BJ (cell line): ENCODE measurements at regions of chr13 and their contacts with region 1.

Region 1: DNA sequence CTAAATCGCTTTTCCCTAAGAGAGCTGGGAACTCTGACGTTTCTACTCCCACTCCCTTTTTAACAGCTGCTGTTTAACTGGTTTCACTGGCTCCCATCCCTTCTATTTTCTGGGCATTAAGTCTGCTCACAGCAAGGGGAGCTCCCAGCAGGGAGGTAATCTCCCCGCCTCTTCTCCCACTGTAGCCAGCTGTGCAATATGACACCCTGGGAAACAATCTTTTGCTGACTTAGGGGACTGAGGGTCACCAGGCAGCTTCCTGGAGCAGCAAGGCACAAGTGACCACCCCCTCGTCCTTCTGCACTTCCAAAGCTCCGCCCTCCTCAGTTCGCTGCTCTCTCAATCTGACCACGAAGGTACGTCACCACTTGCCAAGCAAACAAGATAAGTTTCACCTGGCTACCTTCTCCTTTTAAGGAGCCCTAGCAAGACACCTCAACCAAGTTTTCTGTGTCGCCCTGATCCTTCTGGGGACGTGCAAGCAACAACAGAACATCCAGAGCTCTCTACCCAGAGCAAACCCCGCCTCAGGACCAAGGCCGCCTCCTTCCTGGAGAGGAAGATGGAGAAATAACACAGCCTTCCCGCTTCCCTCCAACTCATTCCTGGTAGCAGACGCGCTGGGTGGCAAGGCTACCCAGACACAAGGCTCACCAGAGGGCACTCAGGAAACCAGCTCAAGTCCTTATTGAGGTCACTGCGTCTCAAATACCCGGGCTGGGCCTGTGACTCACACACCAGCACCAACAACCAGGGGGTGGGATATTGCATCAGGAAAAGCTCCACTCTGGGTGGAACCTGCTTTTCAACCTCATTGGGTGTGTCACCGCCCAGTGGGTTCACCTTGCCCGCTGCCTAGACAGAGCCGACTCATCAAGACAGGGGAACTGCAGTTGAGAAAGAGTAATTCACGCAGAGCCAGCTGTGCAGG is 92.4 kb downstream of the STK24 start:
- DNase-seq: peak; percentile 88
- H3K4me3 ChIP-seq: no peak overlapping the region
- H3K27me3 ChIP-seq: no peaks in the 10 kb centered on the region
- CTCF ChIP-seq: no peak

Region 2: DNA sequence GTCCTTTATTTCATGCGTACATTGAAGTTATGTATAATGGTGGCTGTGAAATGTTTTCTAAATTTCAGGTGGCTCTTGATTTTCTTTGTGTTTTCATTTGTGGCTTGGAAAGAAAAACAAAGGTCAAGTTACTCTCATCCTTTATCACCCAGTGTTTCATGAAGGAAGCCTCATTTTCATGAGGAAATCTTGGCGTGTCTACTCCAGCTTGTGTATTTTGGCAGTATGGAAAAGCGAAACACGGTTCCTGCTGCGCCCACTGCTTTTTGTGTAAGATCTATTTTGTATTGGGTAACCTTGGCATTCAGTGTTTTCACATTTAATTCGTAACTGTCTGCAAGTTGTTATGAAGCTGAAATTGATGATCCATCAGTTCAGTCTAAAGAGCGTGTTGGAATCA is 160.4 kb before region 1 on chr13:
- CTCF ChIA-PET with region 1: no interaction called
- POLR2A ChIA-PET with region 1: no interaction called
- DNase-seq: no peak
- H3K4me3 ChIP-seq: no peak overlapping the region
- H3K27me3 ChIP-seq: no peaks in the 10 kb centered on the region
- CTCF ChIP-seq: no peak

Region 3: DNA sequence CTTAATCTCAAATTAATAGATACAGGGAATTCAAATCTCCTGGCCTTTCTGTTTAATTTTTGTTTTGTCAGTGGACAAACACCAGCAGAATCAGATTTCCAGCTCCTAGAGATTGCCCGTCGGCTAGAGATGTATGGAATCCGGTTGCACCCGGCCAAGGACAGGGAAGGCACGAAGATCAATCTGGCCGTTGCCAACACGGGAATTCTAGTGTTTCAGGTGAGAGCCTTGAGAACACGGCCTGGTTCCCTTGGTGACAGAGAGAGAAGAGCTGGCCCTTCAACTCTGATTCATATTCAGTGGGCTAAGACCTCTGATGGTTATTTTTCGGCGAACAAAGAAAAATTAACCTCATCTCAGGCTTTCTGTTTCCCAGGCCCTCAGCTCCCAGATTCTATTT is 99.0 kb before region 1 on chr13:
- CTCF ChIA-PET with region 1: no interaction called
- POLR2A ChIA-PET with region 1: interaction called, 13 read pairs
- DNase-seq: no peak
- H3K4me3 ChIP-seq: no peak overlapping the region
- H3K27me3 ChIP-seq: no peaks in the 10 kb centered on the region
- CTCF ChIP-seq: no peak

Region 4: GRCh38 chr13:98504371-98504963 is 19.9 kb after region 1 on chr13:
- CTCF ChIA-PET with region 1: interaction called, 10 read pairs
- POLR2A ChIA-PET with region 1: interaction called, 3 read pairs
- DNase-seq: no peak
- H3K4me3 ChIP-seq: no peak overlapping the region
- H3K27me3 ChIP-seq: no peaks in the 10 kb centered on the region
- CTCF ChIP-seq: no peak